Right ventricle myocardium superior (tissue), 1 donor: ENCODE measurements at regions of chr7 and their contacts with region 1.

Region 1: GRCh38 chr7:32347244-32347828 is 142.8 kb downstream of the LSM5 start:
- DNase-seq: no peak
- ATAC-seq: no peak

Region 2: GRCh38 chr7:32212321-32212720 is 135.0 kb before region 1 on chr7:
- intact Hi-C with region 1: loop called (anchors 5 kb)
- DNase-seq: no peak
- ATAC-seq: no peak